WTC11 (cell line): ENCODE measurements at regions of chr19 and their contacts with region 1.

Region 1: GRCh38 chr19:10478903-10479384 is 24.2 kb downstream of the KEAP1 start:
- DNase-seq: peak; percentile 94
- ATAC-seq: peak; percentile 97
- H3K4me3 Mint-ChIP-seq: peak overlapping the region; percentile 53
- H3K27ac Mint-ChIP-seq: no peak overlapping the region
- H3K4me1 Mint-ChIP-seq: peaks cover 4% of the 10 kb centered on the region
- H3K27me3 Mint-ChIP-seq: peaks cover 22% of the 10 kb centered on the region
- CTCF ChIP-seq: peak; percentile 77; the same call in 1 of the 2 replicates

Region 2: GRCh38 chr19:10238172-10238783 is 240.7 kb before region 1 on chr19:
- CTCF ChIA-PET with region 1: no interaction called
- POLR2A ChIA-PET with region 1: no interaction called
- DNase-seq: no peak
- ATAC-seq: no peak
- H3K4me3 Mint-ChIP-seq: no peak overlapping the region
- H3K27ac Mint-ChIP-seq: no peak overlapping the region
- H3K4me1 Mint-ChIP-seq: peaks cover 6% of the 10 kb centered on the region
- H3K27me3 Mint-ChIP-seq: no peaks in the 10 kb centered on the region
- CTCF ChIP-seq: no peak

Region 3: GRCh38 chr19:10403137-10404021 is 75.6 kb before region 1 on chr19 and contains the start of gene CDC37:
- CTCF ChIA-PET with region 1: interaction called, 16 read pairs
- POLR2A ChIA-PET with region 1: no interaction called
- DNase-seq: peak; percentile 98
- ATAC-seq: peak; percentile 79
- H3K4me3 Mint-ChIP-seq: peak within 1 kb of the TSS; percentile 96
- H3K27ac Mint-ChIP-seq: peak within 1 kb of the TSS; percentile 89
- H3K4me1 Mint-ChIP-seq: peaks cover 19% of the 10 kb centered on the region
- H3K27me3 Mint-ChIP-seq: peaks cover 40% of the 10 kb centered on the region
- CTCF ChIP-seq: no peak
- total RNA-seq, gene CDC37: 163 to 204 TPM (median 164 TPM) in 3 replicates

Region 4: DNA sequence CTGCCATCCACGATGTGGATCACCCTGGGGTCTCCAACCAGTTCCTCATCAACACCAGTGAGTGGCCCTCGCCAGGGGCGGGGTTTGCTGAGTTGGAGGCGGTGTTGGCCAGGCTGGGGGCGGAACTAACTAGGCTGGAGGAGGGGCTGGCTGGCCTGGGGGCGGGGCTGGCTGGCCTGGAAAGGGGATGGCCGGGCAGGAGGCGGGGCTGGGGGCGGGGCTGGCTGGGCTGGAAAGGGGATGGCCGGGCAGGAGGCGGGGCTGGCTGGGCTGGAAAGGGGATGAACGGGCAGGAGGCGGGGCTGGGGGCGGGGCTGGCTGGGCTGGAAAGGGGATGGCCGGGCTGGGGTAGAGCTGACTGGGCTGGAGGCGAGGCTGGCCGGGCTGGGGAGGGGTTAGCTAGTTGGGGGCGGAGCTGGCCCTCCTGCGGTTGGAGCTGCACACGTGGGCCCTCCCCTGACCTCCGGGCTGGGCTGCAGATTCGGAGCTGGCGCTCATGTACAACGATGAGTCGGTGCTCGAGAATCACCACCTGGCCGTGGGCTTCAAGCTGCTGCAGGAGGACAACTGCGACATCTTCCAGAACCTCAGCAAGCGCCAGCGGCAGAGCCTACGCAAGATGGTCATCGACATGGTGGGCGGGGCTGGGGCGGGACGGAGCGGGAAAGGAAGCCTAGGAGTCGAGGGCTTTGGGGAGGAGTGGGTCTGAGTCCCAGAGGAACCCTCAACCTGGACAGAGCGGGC is 17.7 kb before region 1 on chr19:
- CTCF ChIA-PET with region 1: interaction called, 28 read pairs
- POLR2A ChIA-PET with region 1: interaction called, 5 read pairs
- DNase-seq: peak; percentile 99
- ATAC-seq: peak; percentile 96
- H3K4me3 Mint-ChIP-seq: peak overlapping the region; percentile 69
- H3K27ac Mint-ChIP-seq: peak overlapping the region; percentile 95; the same call in 1 of the 2 replicates
- H3K4me1 Mint-ChIP-seq: peaks cover 3% of the 10 kb centered on the region; the same call in 1 of the 2 replicates
- H3K27me3 Mint-ChIP-seq: peaks cover 19% of the 10 kb centered on the region
- CTCF ChIP-seq: no peak

Region 5: DNA sequence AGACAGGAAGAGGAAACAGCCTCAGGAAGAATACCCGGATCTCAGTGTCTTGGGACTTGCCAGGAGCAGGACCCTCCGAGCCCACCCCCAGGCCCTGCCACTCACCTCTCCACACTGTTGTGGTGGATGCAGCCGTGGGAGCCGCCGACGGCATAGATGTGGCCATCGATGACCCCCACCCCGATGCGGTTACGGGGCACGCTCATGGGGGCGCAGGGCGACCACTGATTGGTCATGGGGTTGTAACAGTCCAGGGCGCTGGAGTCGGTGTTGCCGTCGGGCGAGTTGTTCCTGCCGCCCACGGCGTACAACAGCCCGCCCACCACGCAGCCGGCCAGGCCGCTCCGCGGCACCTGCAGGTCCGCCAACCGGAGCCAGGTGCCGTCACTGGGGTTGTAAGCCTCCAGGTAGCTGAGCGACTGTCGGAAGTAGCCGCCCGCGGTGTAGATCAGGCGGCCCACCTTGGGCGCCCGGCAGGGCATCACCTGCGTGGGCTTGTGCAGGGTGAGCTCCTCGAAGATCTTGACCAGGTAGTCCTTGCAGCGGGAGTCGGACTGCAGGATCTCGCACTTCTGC is 12.6 kb after region 1 on chr19:
- CTCF ChIA-PET with region 1: interaction called, 12 read pairs
- POLR2A ChIA-PET with region 1: no interaction called
- DNase-seq: no peak
- ATAC-seq: no peak
- H3K4me3 Mint-ChIP-seq: no peak overlapping the region
- H3K27ac Mint-ChIP-seq: peak overlapping the region; percentile 63; the same call in 1 of the 2 replicates
- H3K4me1 Mint-ChIP-seq: no peaks in the 10 kb centered on the region
- H3K27me3 Mint-ChIP-seq: no peaks in the 10 kb centered on the region
- CTCF ChIP-seq: no peak

Region 6: GRCh38 chr19:10501971-10502523 is 23.1 kb after region 1 on chr19:
- CTCF ChIA-PET with region 1: interaction called, 11 read pairs
- POLR2A ChIA-PET with region 1: no interaction called
- DNase-seq: peak; percentile 45
- ATAC-seq: peak; percentile 3
- H3K4me3 Mint-ChIP-seq: peak overlapping the region; percentile 83
- H3K27ac Mint-ChIP-seq: peak overlapping the region; percentile 93
- H3K4me1 Mint-ChIP-seq: peaks cover 26% of the 10 kb centered on the region
- H3K27me3 Mint-ChIP-seq: 0 out of 2 replicates have a peak, but pooled peaks cover 4% of the 10 kb centered on the region
- CTCF ChIP-seq: no peak

Region 7: DNA sequence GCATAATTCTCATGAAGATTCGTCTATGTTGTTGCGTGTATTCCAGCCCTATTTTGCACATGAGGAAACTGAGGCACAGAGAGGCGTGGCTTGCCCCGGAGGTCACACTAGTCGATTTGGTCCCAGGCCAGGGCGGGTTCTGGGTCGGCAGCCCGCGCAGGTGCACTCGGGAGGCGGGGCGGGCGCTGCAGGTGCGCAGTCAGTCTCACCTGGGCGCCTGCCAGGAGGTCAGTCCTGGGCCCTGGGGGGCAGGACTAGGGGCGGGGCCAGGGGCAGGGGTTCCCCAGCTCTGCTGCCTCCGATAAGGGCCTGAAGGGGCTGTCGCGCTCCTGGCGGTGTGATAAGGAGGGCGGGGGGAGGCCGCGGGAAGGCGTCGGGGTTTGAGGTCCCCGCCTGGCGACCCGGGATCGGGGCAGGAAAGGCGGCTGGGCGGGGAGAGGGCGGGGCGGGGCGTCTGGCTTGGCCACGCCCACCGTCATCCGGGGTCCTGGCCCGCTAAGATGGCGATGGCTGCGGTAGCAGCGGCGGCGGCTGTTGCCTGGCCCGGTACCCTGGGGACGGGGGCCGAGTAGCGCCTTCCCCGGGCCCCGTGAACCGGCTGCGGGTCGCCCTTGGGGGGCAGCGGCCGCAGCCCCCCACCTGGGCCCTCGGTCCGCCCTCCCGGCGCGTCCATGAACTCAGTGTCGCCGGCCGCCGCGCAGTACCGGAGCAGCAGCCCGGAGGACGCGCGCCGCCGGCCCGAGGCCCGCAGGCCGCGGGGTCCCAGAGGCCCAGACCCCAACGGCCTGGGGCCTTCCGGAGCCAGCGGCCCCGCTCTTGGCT is 64.7 kb after region 1 on chr19 and contains the start of gene ATG4D:
- CTCF ChIA-PET with region 1: interaction called, 21 read pairs
- POLR2A ChIA-PET with region 1: no interaction called
- DNase-seq: peak; percentile 92
- ATAC-seq: peak; percentile 87
- H3K4me3 Mint-ChIP-seq: peak within 1 kb of the TSS; percentile 83
- H3K27ac Mint-ChIP-seq: peak within 1 kb of the TSS; percentile 93
- H3K4me1 Mint-ChIP-seq: peaks cover 4% of the 10 kb centered on the region; the same call in 1 of the 2 replicates
- H3K27me3 Mint-ChIP-seq: peaks cover 6% of the 10 kb centered on the region
- CTCF ChIP-seq: no peak
- total RNA-seq, gene ATG4D: 50.3 to 59.4 TPM (median 53.8 TPM) in 3 replicates

Region 8: GRCh38 chr19:10551698-10552301 is 72.9 kb after region 1 on chr19:
- CTCF ChIA-PET with region 1: interaction called, 14 read pairs
- POLR2A ChIA-PET with region 1: no interaction called
- DNase-seq: peak; percentile 41
- ATAC-seq: peak; percentile 38
- H3K4me3 Mint-ChIP-seq: no peak overlapping the region
- H3K27ac Mint-ChIP-seq: no peak overlapping the region
- H3K4me1 Mint-ChIP-seq: no peaks in the 10 kb centered on the region
- H3K27me3 Mint-ChIP-seq: no peaks in the 10 kb centered on the region
- CTCF ChIP-seq: no peak